ENCODE measurements at regions of chr19 and their contacts with region 1.

Region 1: DNA sequence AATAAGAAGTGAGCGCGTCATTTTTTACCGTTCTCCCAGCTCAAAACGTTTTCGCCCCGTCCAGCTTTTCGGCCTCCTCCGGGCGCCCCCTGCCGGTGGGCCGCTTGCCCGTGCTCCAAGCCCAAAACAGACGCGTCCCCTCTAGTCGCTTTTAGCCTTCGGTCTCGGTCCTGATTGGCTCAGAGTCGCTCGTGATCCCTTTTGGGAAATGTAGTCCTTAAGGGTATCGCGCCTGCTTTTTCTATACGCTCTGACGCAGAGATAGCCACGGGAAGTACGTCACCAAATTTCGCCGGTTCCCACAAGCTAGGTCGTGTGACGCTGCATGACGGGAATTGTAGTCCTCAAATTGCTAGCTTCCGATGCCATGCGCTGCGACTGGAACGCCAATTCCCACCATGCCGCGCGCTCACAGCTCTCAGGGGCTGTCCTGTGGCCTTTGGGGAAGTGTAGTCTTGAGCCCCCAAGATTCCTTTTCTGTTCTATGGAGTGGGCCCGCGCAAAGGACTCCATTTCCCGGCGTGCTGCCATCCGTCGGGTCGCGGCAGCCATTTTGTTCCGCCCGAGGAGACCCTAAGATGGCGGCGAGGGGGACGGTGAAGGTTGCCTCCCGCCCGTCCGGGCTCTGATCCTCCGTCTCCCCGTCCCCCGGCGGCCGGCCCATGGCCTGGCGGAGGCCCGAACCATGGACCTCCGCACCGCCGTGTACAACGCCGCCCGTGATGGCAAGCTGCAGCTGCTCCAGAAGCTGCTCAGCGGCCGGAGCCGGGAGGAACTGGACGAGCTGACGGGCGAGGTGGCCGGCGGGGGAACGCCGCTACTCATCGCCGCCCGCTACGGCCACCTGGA is at the start of gene FEM1A:
- DNase-seq: peak; percentile 100
- H3K4me3 ChIP-seq: peak within 1 kb of the TSS; percentile 76 to 79
- H3K27ac ChIP-seq: peak within 1 kb of the TSS; percentile 83 to 87
- H3K4me1 ChIP-seq: peaks cover 0 to 38% (median 29%) of the 10 kb centered on the region in 4 donors
- H3K27me3 ChIP-seq: no peaks in the 10 kb centered on the region
- CTCF ChIP-seq: peak; percentile 97 to 99

Region 2: GRCh38 chr19:4732680-4733114 is 58.7 kb before region 1 on chr19:
- intact Hi-C with region 1: loop called (anchors 2 kb)
- DNase-seq: no peak
- H3K4me3 ChIP-seq: no peak overlapping the region
- H3K27ac ChIP-seq: no peak overlapping the region
- H3K4me1 ChIP-seq: peaks cover 0 to 7% (median 0%) of the 10 kb centered on the region in 4 donors
- H3K27me3 ChIP-seq: peaks cover 0 to 27% of the 10 kb centered on the region in 2 donors
- CTCF ChIP-seq: peak; percentile 57 to 68

Region 3: DNA sequence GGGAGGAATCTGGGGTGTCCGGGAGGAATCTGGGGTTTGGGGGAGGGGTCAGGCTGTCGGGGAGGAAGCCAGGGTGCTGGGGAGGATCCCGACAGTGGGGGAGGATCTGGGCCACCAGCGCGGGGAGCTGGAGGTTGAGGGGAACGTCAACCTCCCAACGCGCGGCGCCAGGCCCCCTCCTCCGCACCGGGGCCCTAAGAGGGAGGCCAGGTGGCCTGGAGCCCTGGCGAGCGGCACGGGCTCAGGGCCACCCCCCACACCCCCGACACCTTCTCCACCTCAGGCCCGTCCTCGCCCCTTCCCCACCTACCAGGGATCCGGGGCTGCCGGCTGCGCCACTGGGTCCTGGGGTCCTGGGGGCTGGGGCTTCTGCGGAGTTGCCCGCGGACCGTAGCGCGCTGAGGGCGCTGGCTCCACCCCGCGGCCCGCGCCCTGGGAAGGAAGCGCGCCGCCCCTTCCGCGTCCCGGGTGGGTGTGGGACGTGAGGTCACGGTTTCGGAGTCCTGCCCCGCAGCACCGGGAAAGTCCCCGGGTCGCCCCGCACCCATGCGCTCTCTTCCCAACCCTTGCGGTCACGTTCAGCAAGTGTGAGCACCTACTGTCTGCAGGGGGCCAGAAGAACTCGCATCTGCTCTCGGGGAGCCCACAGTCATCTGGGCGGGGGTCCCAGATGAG is 40.0 kb after region 1 on chr19 and contains the start of gene TICAM1:
- intact Hi-C with region 1: no loop called
- DNase-seq: peak; percentile 69 to 88
- H3K4me3 ChIP-seq: peak within 1 kb of the TSS; percentile 82 to 83
- H3K27ac ChIP-seq: peak within 1 kb of the TSS; percentile 95 to 96
- H3K4me1 ChIP-seq: peaks cover 0 to 28% (median 18%) of the 10 kb centered on the region in 4 donors
- H3K27me3 ChIP-seq: no peaks in the 10 kb centered on the region
- CTCF ChIP-seq: no peak

Measured in tibial artery (tissue), 4 donors.